ENCODE measurements at regions of chr2 and their contacts with region 1.

Region 1: GRCh38 chr2:130342533-130343275 is at the start of gene IMP4:
- DNase-seq: peak; percentile 97
- ATAC-seq: peak; percentile 89
- H3K4me3 Mint-ChIP-seq: peak within 1 kb of the TSS; percentile 98
- H3K27ac Mint-ChIP-seq: peak within 1 kb of the TSS; percentile 99
- H3K4me1 Mint-ChIP-seq: peaks cover 34% of the 10 kb centered on the region
- H3K27me3 Mint-ChIP-seq: no peaks in the 10 kb centered on the region
- CTCF ChIP-seq: no peak
- total RNA-seq, gene IMP4: 160 to 163 TPM

Region 2: GRCh38 chr2:130181325-130181879 is 161.3 kb before region 1 on chr2 and contains the start of gene SMPD4:
- CTCF ChIA-PET with region 1: interaction called, 15 read pairs
- POLR2A ChIA-PET with region 1: interaction called, 14 read pairs
- intact Hi-C with region 1: loop called (anchors 5 kb)
- DNase-seq: peak; percentile 97
- ATAC-seq: peak; percentile 79
- H3K4me3 Mint-ChIP-seq: peak within 1 kb of the TSS; percentile 93
- H3K27ac Mint-ChIP-seq: peak within 1 kb of the TSS; percentile 95
- H3K4me1 Mint-ChIP-seq: peaks cover 16% of the 10 kb centered on the region
- H3K27me3 Mint-ChIP-seq: no peaks in the 10 kb centered on the region
- CTCF ChIP-seq: no peak
- total RNA-seq, gene SMPD4: 73.8 to 75.8 TPM

Region 3: DNA sequence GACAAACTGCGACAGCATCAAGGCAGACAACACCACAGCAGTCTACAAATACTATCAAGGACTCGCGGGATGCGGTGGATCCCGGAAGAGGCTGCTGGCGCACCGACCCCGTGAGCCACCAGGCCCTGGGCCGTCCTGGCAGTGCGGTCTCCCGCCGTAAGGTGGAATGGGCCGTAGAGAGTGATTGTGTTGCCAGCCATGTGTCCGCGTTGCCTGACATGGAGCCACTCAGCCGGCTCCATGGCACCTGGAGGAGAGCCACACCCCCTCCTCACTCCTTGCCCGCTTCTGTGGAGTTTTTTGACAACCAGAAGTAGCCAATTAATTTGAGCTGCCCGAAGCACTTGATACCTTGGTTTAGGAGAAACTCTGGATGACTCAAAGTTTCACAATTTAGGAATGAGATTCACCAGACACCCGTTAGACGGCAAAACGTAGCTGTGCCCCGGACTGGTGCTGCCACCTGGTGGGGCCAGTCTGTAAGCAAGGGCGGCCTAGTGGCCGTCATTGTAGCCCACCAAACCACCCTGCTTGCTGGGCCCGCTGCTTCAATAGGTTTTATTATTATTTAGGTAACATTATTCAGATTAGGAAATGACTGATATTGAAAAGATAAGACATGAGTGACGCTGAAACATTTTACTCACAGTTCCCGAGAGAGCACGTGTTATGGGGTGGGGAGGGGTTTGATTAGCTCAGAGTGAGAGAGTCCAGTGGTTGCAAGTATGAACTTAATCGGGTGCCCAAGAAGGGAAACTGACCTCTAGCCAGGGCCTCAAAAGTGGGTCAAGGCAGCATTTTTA is 10.2 kb before region 1 on chr2:
- CTCF ChIA-PET with region 1: interaction called, 34 read pairs
- POLR2A ChIA-PET with region 1: interaction called, 9 read pairs
- intact Hi-C with region 1: no loop called
- DNase-seq: peak; percentile 83
- ATAC-seq: peak; percentile 88
- H3K4me3 Mint-ChIP-seq: peak overlapping the region; percentile 41
- H3K27ac Mint-ChIP-seq: no peak overlapping the region
- H3K4me1 Mint-ChIP-seq: peaks cover 8% of the 10 kb centered on the region
- H3K27me3 Mint-ChIP-seq: peaks cover 23% of the 10 kb centered on the region
- CTCF ChIP-seq: peak; percentile 91

Region 4: DNA sequence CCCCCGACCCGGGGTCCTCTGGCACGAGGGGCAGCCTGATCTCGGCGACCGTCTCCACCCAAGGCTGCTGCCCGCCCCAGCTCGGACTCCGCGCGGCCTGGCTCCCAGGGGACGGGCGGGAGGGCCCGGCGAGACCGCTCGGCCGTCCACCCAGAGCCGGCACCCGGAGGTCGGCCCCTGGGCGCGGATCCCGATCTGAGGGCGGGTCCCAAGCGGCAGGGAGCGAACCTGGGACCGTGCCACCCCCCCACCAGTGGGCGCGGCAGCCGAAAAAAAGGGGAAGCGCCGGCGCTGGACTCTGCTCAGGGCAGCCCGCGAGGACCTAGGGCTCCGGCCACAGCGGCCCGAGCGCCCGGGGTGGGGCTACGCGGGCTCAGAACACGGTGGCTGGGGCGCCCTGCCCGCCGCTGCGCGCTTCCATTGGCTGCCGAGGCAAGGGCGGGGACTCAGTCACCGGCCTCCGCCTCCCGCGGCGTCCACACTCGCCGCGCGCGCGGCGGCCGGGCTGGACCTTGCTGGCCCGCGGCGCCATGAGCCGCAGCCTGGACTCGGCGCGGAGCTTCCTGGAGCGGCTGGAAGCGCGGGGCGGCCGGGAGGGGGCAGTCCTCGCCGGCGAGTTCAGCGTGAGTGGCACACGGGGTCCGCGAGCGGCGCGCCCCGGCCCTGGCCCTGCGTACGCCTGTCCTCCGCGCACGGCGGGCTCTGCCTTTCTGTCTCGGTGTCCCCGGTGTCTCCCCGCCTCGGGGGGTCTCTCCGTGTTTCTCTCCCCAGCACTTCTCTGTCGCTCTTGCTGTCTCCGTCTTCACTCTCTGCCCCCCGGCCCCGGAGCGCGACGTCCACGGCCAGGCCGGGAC is 13.1 kb after region 1 on chr2 and contains the start of gene PTPN18:
- CTCF ChIA-PET with region 1: interaction called, 4 read pairs
- POLR2A ChIA-PET with region 1: interaction called, 65 read pairs
- intact Hi-C with region 1: no loop called
- DNase-seq: peak; percentile 66
- ATAC-seq: peak; percentile 93
- H3K4me3 Mint-ChIP-seq: peak within 1 kb of the TSS; percentile 73
- H3K27ac Mint-ChIP-seq: peak within 1 kb of the TSS; percentile 13
- H3K4me1 Mint-ChIP-seq: peaks cover 9% of the 10 kb centered on the region
- H3K27me3 Mint-ChIP-seq: no peaks in the 10 kb centered on the region
- CTCF ChIP-seq: peak; percentile 51
- total RNA-seq, gene PTPN18: 32.9 to 35.4 TPM

Region 5: DNA sequence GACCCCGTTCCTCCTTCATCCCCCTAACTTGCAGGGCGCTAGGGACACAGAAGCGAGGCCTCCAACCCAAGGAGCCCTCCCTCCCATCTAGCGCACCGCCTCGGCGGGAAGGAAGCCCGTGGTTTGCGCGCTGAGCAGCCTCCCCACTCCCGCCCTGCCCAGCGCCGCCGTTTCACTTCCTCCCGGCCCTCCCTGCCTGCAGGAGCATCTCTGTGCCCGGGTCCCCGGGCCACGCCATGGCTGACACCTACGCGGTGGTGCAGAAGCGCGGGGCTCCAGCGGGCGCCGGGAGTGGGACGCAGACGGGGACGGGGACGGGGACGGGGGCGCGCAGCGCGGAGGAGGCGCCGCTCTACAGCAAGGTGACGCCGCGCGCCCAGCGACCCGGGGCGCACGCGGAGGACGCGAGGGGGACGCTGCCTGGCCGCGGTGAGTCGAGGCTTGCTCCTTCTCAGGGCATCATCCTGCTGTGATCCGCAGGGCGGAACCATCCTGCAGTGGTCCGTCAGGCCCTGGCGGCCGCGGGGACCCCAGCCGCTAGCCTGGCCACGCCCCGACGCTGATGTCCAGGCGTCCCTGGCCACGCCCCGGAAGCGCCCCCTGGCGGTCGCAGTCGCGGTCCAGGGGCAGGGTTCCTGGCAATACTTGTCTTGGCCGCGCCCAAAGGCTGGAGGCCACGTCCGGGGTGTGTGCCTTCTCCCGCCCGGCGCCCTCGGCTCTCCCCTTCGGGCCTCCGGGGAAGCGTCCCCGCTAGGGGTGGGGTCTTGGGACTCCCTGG is 29.5 kb after region 1 on chr2:
- CTCF ChIA-PET with region 1: interaction called, 18 read pairs
- POLR2A ChIA-PET with region 1: interaction called, 28 read pairs
- intact Hi-C with region 1: no loop called
- DNase-seq: peak; percentile 79
- ATAC-seq: peak; percentile 65
- H3K4me3 Mint-ChIP-seq: peak overlapping the region; percentile 91
- H3K27ac Mint-ChIP-seq: peak overlapping the region; percentile 97
- H3K4me1 Mint-ChIP-seq: peaks cover 54% of the 10 kb centered on the region
- H3K27me3 Mint-ChIP-seq: no peaks in the 10 kb centered on the region
- CTCF ChIP-seq: peak; percentile 95